Caco-2 (cell line): ENCODE measurements at regions of chr20 and their contacts with region 1.

Region 1: GRCh38 chr20:63973636-63974402 is 4.1 kb upstream of the ZNF512B start:
- DNase-seq: peak; percentile 92 to 98
- H3K4me3 ChIP-seq: peak overlapping the region; percentile 38
- H3K4me3 Mint-ChIP-seq: peak overlapping the region; percentile 63
- H3K27ac Mint-ChIP-seq: peak overlapping the region; percentile 1
- H3K4me1 ChIP-seq: peaks cover 26% of the 10 kb centered on the region
- H3K4me1 Mint-ChIP-seq: peaks cover 22% of the 10 kb centered on the region
- H3K27me3 ChIP-seq: no peaks in the 10 kb centered on the region
- H3K27me3 Mint-ChIP-seq: peaks cover 3% of the 10 kb centered on the region
- CTCF ChIP-seq: peak; percentile 100

Region 2: GRCh38 chr20:63580796-63581461 is 392.9 kb before region 1 on chr20:
- CTCF ChIA-PET with region 1: no interaction called
- POLR2A ChIA-PET with region 1: no interaction called
- intact Hi-C with region 1: loop called (anchors 2 kb)
- DNase-seq: peak; percentile 84 to 86
- H3K4me3 ChIP-seq: no peak overlapping the region
- H3K4me3 Mint-ChIP-seq: no peak overlapping the region
- H3K27ac Mint-ChIP-seq: no peak overlapping the region
- H3K4me1 ChIP-seq: no peaks in the 10 kb centered on the region
- H3K4me1 Mint-ChIP-seq: no peaks in the 10 kb centered on the region
- H3K27me3 ChIP-seq: no peaks in the 10 kb centered on the region
- H3K27me3 Mint-ChIP-seq: peaks cover 3% of the 10 kb centered on the region
- CTCF ChIP-seq: peak; percentile 78 to 92

Region 3: GRCh38 chr20:63707549-63708300 is 266.1 kb before region 1 on chr20 and contains the starts of genes ARFRP1 and ZGPAT:
- CTCF ChIA-PET with region 1: interaction called, 10 read pairs
- POLR2A ChIA-PET with region 1: no interaction called
- intact Hi-C with region 1: no loop called
- DNase-seq: peak; percentile 94 to 99
- H3K4me3 ChIP-seq: peak within 1 kb of the TSS; percentile 96
- H3K4me3 Mint-ChIP-seq: peak within 1 kb of the TSS; percentile 87
- H3K27ac Mint-ChIP-seq: peak within 1 kb of the TSS; percentile 84
- H3K4me1 ChIP-seq: peaks cover 14% of the 10 kb centered on the region
- H3K4me1 Mint-ChIP-seq: peaks cover 16% of the 10 kb centered on the region
- H3K27me3 ChIP-seq: no peaks in the 10 kb centered on the region
- H3K27me3 Mint-ChIP-seq: no peaks in the 10 kb centered on the region
- CTCF ChIP-seq: peak in 1 of 2 experiments; percentile 13
- total RNA-seq, gene ARFRP1: 119 and 126 TPM in 2 replicates
- total RNA-seq, gene ZGPAT: 69.3 and 74.7 TPM in 2 replicates

Region 4: DNA sequence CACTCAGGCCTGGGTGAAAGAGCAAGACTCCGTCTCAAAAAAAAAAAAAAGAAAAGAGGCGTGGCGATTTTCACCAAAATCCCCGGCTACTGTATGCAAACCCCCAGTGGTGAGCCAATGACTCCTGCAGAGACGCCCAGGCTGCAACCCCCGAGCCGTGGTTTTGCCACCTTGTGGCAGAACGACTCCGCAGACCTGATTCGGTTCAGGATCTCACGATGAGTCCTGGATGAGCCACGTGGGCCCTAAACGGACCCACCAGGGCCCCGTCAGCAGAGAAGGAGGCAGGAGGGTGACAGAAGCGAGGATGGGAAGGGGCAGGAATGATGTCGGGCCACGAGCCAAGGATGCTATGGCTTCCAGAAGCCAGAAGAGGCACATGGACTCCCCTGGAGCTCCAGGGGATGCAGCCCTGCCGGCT is 191.8 kb before region 1 on chr20:
- CTCF ChIA-PET with region 1: interaction called, 6 read pairs
- POLR2A ChIA-PET with region 1: no interaction called
- intact Hi-C with region 1: loop called (anchors 10 kb)
- DNase-seq: no peak
- H3K4me3 ChIP-seq: no peak overlapping the region
- H3K4me3 Mint-ChIP-seq: no peak overlapping the region
- H3K27ac Mint-ChIP-seq: no peak overlapping the region
- H3K4me1 ChIP-seq: no peaks in the 10 kb centered on the region
- H3K4me1 Mint-ChIP-seq: no peaks in the 10 kb centered on the region
- H3K27me3 ChIP-seq: no peaks in the 10 kb centered on the region
- H3K27me3 Mint-ChIP-seq: no peaks in the 10 kb centered on the region
- CTCF ChIP-seq: peak; percentile 20 to 36

Region 5: GRCh38 chr20:63911176-63911575 is 62.6 kb before region 1 on chr20:
- CTCF ChIA-PET with region 1: interaction called, 3 read pairs
- POLR2A ChIA-PET with region 1: no interaction called
- intact Hi-C with region 1: loop called (anchors 1 kb)
- DNase-seq: no peak
- H3K4me3 ChIP-seq: no peak overlapping the region
- H3K4me3 Mint-ChIP-seq: no peak overlapping the region
- H3K27ac Mint-ChIP-seq: no peak overlapping the region
- H3K4me1 ChIP-seq: peaks cover 30% of the 10 kb centered on the region
- H3K4me1 Mint-ChIP-seq: peaks cover 37% of the 10 kb centered on the region
- H3K27me3 ChIP-seq: no peaks in the 10 kb centered on the region
- H3K27me3 Mint-ChIP-seq: no peaks in the 10 kb centered on the region
- CTCF ChIP-seq: no peak